T-cell (primary cell): ENCODE measurements at regions of chr10 and their contacts with region 1.

Region 1: DNA sequence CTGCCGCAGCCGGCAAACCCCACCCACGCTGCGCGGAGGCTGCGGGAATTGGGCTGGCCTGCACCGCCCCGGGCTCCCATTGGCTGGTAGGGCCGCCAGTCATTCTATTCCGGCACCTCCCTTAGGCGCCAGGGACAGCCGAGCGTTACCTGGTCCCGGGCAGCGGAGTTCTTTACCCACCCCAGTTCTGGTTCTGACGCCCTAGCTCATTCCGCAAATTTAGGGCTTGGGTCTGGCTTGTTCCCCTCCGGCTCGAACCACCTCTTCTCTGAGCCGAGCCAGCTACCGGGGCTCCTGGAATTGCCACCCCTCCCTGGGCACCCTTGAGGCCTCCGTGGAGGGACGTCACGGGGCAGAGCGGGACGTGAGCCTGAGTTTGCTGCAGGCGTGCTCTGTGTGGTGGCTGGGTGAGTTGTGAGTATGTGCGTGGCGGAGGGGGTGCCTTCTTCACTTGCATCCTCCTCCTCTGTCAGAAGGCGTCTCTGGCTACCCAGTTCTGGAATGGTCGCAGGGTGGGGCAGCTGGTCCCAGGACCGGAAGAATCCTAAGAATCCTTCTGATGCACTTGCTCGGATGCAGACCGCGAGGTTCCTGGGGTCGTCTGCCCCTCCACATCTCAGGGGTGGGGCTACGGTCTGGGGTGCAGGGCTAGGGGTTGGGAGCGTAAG is at the starts of genes PDZD7 and SFXN3:
- DNase-seq: peak; percentile 88 to 98 (median 96)
- ATAC-seq: peak; percentile 83 to 91 (median 88)
- H3K4me3 ChIP-seq: peak within 1 kb of the TSS; percentile 73 to 85
- H3K4me3 Mint-ChIP-seq: peak within 1 kb of the TSS; percentile 84 to 92 (median 91)
- H3K27ac ChIP-seq: peak within 1 kb of the TSS; percentile 93
- H3K27ac Mint-ChIP-seq: peak within 1 kb of the TSS; percentile 94 to 96
- H3K4me1 ChIP-seq: peaks cover 7 to 27% of the 10 kb centered on the region in 2 experiments
- H3K4me1 Mint-ChIP-seq: peaks cover 17 to 26% (median 20%) of the 10 kb centered on the region in 3 donors
- H3K27me3 ChIP-seq: peaks cover 0 to 11% of the 10 kb centered on the region in 2 experiments
- H3K27me3 Mint-ChIP-seq: no peaks in the 10 kb centered on the region
- total RNA-seq, gene PDZD7: 1.7 to 2.7 (median 2.3) TPM
- total RNA-seq, gene SFXN3: 45.2 to 113 (median 91.0) TPM

Region 2: DNA sequence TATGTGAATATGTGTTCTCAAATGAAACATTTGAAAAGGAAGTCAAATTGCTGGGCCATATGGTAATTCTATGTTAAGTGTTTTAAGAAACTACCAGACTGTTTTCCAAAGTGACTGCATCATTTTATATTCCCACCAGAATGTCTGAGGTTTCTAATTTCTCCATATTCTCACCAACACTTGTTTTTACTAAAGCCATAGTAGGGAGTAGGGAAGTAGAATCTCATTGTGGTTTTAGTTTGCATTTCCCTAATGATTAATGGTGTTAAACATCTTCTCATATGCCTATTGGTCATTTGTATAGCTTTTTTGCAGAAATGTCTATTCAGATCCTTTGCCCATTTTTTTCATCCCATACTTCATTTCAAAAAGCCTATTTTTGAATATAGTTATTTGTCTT is 71.0 kb before region 1 on chr10:
- CTCF ChIA-PET with region 1: no interaction called
- POLR2A ChIA-PET with region 1: no interaction called
- DNase-seq: no peak
- ATAC-seq: no peak
- H3K4me3 ChIP-seq: no peak overlapping the region
- H3K4me3 Mint-ChIP-seq: no peak overlapping the region
- H3K27ac ChIP-seq: no peak overlapping the region
- H3K27ac Mint-ChIP-seq: no peak overlapping the region
- H3K4me1 ChIP-seq: no peaks in the 10 kb centered on the region
- H3K4me1 Mint-ChIP-seq: peaks cover 3 to 5% (median 4%) of the 10 kb centered on the region in 3 donors
- H3K27me3 ChIP-seq: no peaks in the 10 kb centered on the region
- H3K27me3 Mint-ChIP-seq: no peaks in the 10 kb centered on the region

Region 3: DNA sequence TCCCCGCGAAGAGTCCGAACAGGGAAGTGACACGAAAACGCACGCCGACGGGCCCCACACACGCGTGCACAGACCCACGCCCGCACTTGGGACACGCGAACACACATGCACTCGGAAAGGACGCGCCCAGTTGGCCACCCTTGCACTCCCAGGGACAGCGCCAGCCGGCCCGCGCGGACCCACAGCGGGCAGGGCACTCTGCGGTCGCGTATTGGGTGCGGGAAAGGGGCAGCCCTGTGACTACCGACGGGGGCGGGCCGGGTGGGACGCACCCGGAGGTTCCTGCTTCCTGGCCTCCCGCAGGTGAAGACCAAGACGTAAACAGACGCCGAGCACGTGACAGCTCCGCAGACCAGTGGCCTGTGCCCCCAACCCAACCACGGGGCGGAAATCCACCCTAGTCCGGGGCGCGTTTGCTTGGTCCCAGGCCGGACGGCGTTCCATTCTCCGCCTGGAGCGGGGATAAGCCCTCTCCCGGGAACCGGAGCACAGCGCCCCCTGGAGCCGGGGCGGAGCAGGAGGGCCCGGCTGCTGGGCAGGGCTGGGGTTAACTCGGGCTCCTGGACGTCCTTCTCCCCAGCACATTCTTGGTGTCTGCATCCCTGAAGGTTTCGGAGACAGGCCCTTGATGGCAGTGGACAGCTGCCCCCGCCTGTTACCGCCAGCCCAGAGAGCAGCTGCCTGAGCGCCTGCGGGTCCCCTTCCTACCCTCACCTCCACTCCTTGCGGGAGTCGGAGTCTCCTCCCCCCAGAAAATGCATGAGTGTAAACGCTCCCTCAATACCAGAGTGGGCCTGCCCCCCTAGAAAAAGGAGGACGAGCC is 33.7 kb before region 1 on chr10:
- CTCF ChIA-PET with region 1: interaction called, 6 to 10 read pairs
- POLR2A ChIA-PET with region 1: interaction called in 1 of 2 experiments, 3 read pairs
- DNase-seq: peak in 34 of 35 experiments; percentile 27 to 79 (median 51)
- ATAC-seq: peak; percentile 45 to 56 (median 54)
- H3K4me3 ChIP-seq: peak overlapping the region; percentile 91 to 96
- H3K4me3 Mint-ChIP-seq: peak overlapping the region; percentile 78 to 95 (median 92)
- H3K27ac ChIP-seq: peak overlapping the region; percentile 74
- H3K27ac Mint-ChIP-seq: peak overlapping the region; percentile 95 to 97
- H3K4me1 ChIP-seq: peaks cover 12 to 38% of the 10 kb centered on the region in 2 experiments
- H3K4me1 Mint-ChIP-seq: peaks cover 24 to 32% (median 30%) of the 10 kb centered on the region in 3 donors
- H3K27me3 ChIP-seq: no peaks in the 10 kb centered on the region
- H3K27me3 Mint-ChIP-seq: no peaks in the 10 kb centered on the region

Region 4: GRCh38 chr10:101018600-101019439 is 12.4 kb before region 1 on chr10:
- CTCF ChIA-PET with region 1: interaction called, 7 to 25 read pairs
- POLR2A ChIA-PET with region 1: interaction called in 1 of 2 experiments, 3 read pairs
- DNase-seq: peak in 33 of 35 experiments; percentile 35 to 76 (median 57)
- ATAC-seq: peak; percentile 73 to 80 (median 78)
- H3K4me3 ChIP-seq: no peak overlapping the region
- H3K4me3 Mint-ChIP-seq: no peak overlapping the region
- H3K27ac ChIP-seq: no peak overlapping the region
- H3K27ac Mint-ChIP-seq: no peak overlapping the region
- H3K4me1 ChIP-seq: peaks cover 0 to 16% of the 10 kb centered on the region in 2 experiments
- H3K4me1 Mint-ChIP-seq: peaks cover 6 to 14% (median 9%) of the 10 kb centered on the region in 3 donors
- H3K27me3 ChIP-seq: peaks cover 0 to 74% of the 10 kb centered on the region in 2 experiments
- H3K27me3 Mint-ChIP-seq: peaks cover 45 to 56% of the 10 kb centered on the region in 2 donors

Region 5: DNA sequence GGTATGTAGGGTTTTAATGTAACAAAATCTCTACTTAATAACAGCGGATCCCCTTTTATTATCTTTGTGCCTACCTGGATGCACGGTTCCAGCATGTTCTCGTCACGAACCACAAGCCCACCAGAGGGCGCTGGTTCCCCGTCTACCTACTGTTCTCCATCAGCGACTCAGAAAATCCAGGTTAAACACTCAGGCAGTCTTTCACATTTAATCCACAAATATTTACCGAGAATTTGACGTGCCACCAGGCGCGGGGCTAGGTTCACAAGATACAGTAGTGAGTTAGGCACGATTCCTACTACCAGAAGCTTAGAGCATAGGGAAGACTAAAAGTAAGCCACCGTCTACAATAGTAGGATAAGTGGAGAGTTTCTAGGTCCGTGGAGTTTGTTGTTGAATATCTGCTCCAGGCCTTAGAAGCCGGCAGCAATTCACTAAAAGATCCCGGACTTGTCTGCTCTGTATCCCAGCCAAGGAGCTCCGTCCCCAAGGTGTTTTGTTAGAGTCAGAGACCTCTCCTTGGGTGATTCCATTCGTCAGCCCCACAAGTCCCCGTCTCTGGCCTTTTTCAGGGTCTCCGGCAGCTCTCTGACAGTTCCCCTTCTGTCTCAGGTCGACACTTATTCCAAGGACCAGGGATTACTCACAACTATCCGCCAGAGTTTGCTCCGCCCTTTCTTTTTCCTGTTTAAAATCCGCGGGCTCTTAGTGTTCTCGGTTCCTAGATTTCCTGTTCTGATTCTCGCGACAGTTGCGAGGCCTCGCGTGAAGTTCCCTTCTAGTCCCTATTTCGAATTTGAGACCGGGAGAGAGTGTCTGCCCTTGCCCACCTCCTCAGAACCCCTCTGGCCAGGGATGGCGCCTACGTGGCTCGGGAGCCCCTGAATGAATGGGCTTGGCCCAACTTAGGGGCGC is 29.0 kb after region 1 on chr10:
- CTCF ChIA-PET with region 1: interaction called, 10 to 17 read pairs
- POLR2A ChIA-PET with region 1: interaction called in 1 of 2 experiments, 3 read pairs
- DNase-seq: peak; percentile 67 to 94 (median 86)
- ATAC-seq: peak; percentile 75 to 81 (median 76)
- H3K4me3 ChIP-seq: peak overlapping the region; percentile 99 to 100
- H3K4me3 Mint-ChIP-seq: peak overlapping the region; percentile 86 to 93 (median 87)
- H3K27ac ChIP-seq: peak overlapping the region; percentile 90
- H3K27ac Mint-ChIP-seq: peak overlapping the region; percentile 91 to 98
- H3K4me1 ChIP-seq: peaks cover 11 to 34% of the 10 kb centered on the region in 2 experiments
- H3K4me1 Mint-ChIP-seq: peaks cover 22 to 35% (median 23%) of the 10 kb centered on the region in 3 donors
- H3K27me3 ChIP-seq: peaks cover 6 to 32% of the 10 kb centered on the region in 2 experiments
- H3K27me3 Mint-ChIP-seq: peaks cover 17 to 19% of the 10 kb centered on the region in 2 donors

Region 6: GRCh38 chr10:101258179-101258885 is 227.1 kb after region 1 on chr10:
- CTCF ChIA-PET with region 1: no interaction called
- POLR2A ChIA-PET with region 1: no interaction called
- DNase-seq: no peak
- ATAC-seq: no peak
- H3K4me3 ChIP-seq: no peak overlapping the region
- H3K4me3 Mint-ChIP-seq: no peak overlapping the region
- H3K27ac ChIP-seq: no peak overlapping the region
- H3K27ac Mint-ChIP-seq: no peak overlapping the region
- H3K4me1 ChIP-seq: no peaks in the 10 kb centered on the region
- H3K4me1 Mint-ChIP-seq: no peaks in the 10 kb centered on the region
- H3K27me3 ChIP-seq: peaks cover 8 to 53% of the 10 kb centered on the region in 2 experiments
- H3K27me3 Mint-ChIP-seq: peaks cover 48 to 54% of the 10 kb centered on the region in 2 donors